Naive thymus-derived CD4-positive, alpha-beta T cell (primary cell): ENCODE measurements at regions of chr13 and their contacts with region 1.

Region 1: GRCh38 chr13:114065141-114065925 is 67.1 kb downstream of the RASA3 start:
- DNase-seq: peak; percentile 42 to 74 (median 63)
- ATAC-seq: peak; percentile 77
- H3K4me3 ChIP-seq: peak overlapping the region; percentile 66
- H3K4me3 Mint-ChIP-seq: peak overlapping the region; percentile 78 to 89 (median 86)
- H3K27ac ChIP-seq: peak overlapping the region; percentile 76
- H3K27ac Mint-ChIP-seq: peak overlapping the region; percentile 86 to 99 (median 92)
- H3K4me1 ChIP-seq: peaks cover 51 to 60% of the 10 kb centered on the region in 2 donors
- H3K4me1 Mint-ChIP-seq: peaks cover 51 to 72% (median 62%) of the 10 kb centered on the region in 7 donors
- H3K27me3 ChIP-seq: no peaks in the 10 kb centered on the region
- H3K27me3 Mint-ChIP-seq: no peaks in the 10 kb centered on the region

Region 2: DNA sequence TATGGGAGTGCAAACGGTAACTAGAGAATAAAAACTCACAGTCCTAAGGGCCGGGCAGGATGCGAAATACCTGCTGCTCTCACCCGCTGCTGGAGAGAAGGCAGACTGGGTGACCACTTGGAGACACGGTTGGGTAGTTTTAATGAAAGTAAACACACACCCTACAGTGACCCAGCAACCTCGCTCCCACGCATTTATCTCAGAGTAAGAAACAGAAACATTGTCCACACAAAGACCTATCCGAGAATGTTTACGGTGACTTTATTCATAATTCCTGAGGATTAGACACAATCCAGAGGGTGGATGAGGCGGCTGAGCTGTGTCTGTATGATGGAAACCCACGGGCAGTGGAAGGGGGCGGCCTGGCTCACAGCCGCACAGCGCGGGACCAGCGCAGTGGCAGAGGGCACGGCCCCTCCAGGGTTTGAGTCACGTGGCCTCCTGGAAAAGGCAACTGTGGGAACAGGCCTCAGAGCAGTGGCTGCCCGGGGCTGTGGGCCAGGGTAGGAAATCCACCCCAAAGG is 17.9 kb before region 1 on chr13:
- CTCF ChIA-PET with region 1: no interaction called
- POLR2A ChIA-PET with region 1: interaction called, 4 read pairs
- intact Hi-C with region 1: loop called in 1 of 2 experiments (anchors 2 kb)
- DNase-seq: no peak
- ATAC-seq: no peak
- H3K4me3 ChIP-seq: no peak overlapping the region
- H3K4me3 Mint-ChIP-seq: peak overlapping the region in 6 of 10 donors; percentile 12 to 75 (median 36)
- H3K27ac ChIP-seq: peak overlapping the region; percentile 10
- H3K27ac Mint-ChIP-seq: peak overlapping the region; percentile 18 to 95 (median 55)
- H3K4me1 ChIP-seq: peaks cover 22 to 34% of the 10 kb centered on the region in 2 donors
- H3K4me1 Mint-ChIP-seq: peaks cover 52 to 79% (median 69%) of the 10 kb centered on the region in 7 donors
- H3K27me3 ChIP-seq: no peaks in the 10 kb centered on the region
- H3K27me3 Mint-ChIP-seq: no peaks in the 10 kb centered on the region

Region 3: GRCh38 chr13:114054269-114054668 is 11.1 kb before region 1 on chr13:
- CTCF ChIA-PET with region 1: interaction called, 4 read pairs
- POLR2A ChIA-PET with region 1: interaction called, 4 read pairs
- intact Hi-C with region 1: loop called in 1 of 2 experiments (anchors 1 kb)
- DNase-seq: peak in 1 of 9 donors; percentile 34
- ATAC-seq: peak; percentile 44
- H3K4me3 ChIP-seq: no peak overlapping the region
- H3K4me3 Mint-ChIP-seq: peak overlapping the region in 3 of 10 donors; percentile 18 to 32 (median 25)
- H3K27ac ChIP-seq: no peak overlapping the region
- H3K27ac Mint-ChIP-seq: peak overlapping the region in 5 of 9 donors; percentile 38 to 72 (median 45)
- H3K4me1 ChIP-seq: peaks cover 16 to 34% of the 10 kb centered on the region in 2 donors
- H3K4me1 Mint-ChIP-seq: peaks cover 14 to 85% (median 63%) of the 10 kb centered on the region in 7 donors
- H3K27me3 ChIP-seq: no peaks in the 10 kb centered on the region
- H3K27me3 Mint-ChIP-seq: no peaks in the 10 kb centered on the region

Region 4: GRCh38 chr13:114132419-114133121 is 67.2 kb after region 1 on chr13 and contains the start of gene RASA3:
- CTCF ChIA-PET with region 1: no interaction called
- POLR2A ChIA-PET with region 1: interaction called, 23 read pairs
- intact Hi-C with region 1: loop called (anchors 1 kb)
- DNase-seq: peak in 8 of 9 donors; percentile 52 to 75 (median 58)
- ATAC-seq: peak; percentile 69
- H3K4me3 ChIP-seq: peak within 1 kb of the TSS; percentile 90
- H3K4me3 Mint-ChIP-seq: peak within 1 kb of the TSS; percentile 96 to 100 (median 100)
- H3K27ac ChIP-seq: peak within 1 kb of the TSS; percentile 85
- H3K27ac Mint-ChIP-seq: peak within 1 kb of the TSS; percentile 82 to 100 (median 99)
- H3K4me1 ChIP-seq: peaks cover 32 to 49% of the 10 kb centered on the region in 2 donors
- H3K4me1 Mint-ChIP-seq: peaks cover 36 to 74% (median 56%) of the 10 kb centered on the region in 7 donors
- H3K27me3 ChIP-seq: no peaks in the 10 kb centered on the region
- H3K27me3 Mint-ChIP-seq: peaks cover 0 to 4% (median 0%) of the 10 kb centered on the region in 5 donors
- total RNA-seq, gene RASA3: 110 to 227 (median 199) TPM